ENCODE measurements at regions of chr20 and their contacts with region 1.

Region 1: GRCh38 chr20:44683263-44684046 is 31.7 kb upstream of the CCN5 start:
- DNase-seq: no peak
- H3K4me3 ChIP-seq: no peak overlapping the region
- CTCF ChIP-seq: peak; percentile 77

Region 2: DNA sequence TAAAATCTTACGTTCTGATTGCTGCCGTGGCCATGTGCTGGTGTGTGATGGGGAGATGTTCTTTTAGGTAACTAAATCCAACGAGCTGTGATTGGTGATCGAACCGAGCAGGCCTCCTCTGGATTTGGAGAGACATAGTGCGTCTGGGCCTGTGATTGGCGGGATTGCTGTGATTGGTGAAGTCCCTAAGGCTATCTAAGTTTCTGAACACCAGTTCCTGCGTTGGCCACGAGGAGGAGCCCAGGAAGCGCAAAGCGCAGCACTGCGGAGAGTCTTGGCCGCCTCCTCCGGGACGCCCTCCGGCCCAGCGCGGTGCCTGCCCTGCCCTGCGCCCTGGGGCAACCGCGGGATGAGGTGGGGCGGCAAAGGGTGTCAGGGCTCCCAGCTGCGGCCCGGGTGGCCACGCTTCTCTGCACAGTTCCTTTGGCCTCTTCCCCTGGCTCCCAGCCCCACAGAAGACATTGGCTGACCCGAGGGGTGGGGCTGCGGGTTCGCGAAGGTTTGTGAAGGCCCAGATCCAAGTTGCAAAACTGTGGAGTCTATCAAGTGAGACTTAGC is 294.9 kb before region 1 on chr20:
- CTCF ChIA-PET with region 1: interaction called, 24 read pairs
- POLR2A ChIA-PET with region 1: no interaction called
- DNase-seq: peak; percentile 7
- H3K4me3 ChIP-seq: no peak overlapping the region
- CTCF ChIP-seq: peak; percentile 90

Region 3: GRCh38 chr20:44648579-44648978 is 34.9 kb before region 1 on chr20:
- CTCF ChIA-PET with region 1: interaction called, 18 read pairs
- POLR2A ChIA-PET with region 1: interaction called, 6 read pairs
- DNase-seq: no peak
- H3K4me3 ChIP-seq: no peak overlapping the region
- CTCF ChIP-seq: no peak

Region 4: DNA sequence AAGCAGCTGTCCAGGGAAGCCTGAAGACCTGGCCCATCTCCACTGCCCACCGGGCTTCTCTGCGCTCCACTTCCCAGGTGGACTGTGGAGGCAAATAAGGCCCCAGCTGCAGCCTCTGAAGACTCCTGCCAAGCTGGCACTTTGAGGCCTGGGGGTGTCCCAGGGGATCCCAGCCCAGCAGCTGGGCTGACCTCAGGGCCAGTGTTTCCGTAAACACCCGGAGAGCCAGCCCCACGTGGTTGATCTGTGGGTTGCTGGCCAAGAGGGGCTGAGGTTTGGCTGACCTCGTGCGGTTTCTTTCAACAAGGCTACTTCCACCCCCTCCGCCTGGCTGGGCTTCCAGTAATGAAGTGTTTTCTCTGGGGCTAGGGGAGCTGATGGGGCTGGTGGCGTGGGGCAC is 19.3 kb after region 1 on chr20:
- CTCF ChIA-PET with region 1: interaction called, 28 read pairs
- POLR2A ChIA-PET with region 1: no interaction called
- DNase-seq: no peak
- H3K4me3 ChIP-seq: no peak overlapping the region
- CTCF ChIP-seq: no peak

Region 5: GRCh38 chr20:44733341-44734069 is 50.0 kb after region 1 on chr20:
- CTCF ChIA-PET with region 1: interaction called, 801 read pairs
- POLR2A ChIA-PET with region 1: no interaction called
- DNase-seq: no peak
- H3K4me3 ChIP-seq: no peak overlapping the region
- CTCF ChIP-seq: peak; percentile 93

Region 6: DNA sequence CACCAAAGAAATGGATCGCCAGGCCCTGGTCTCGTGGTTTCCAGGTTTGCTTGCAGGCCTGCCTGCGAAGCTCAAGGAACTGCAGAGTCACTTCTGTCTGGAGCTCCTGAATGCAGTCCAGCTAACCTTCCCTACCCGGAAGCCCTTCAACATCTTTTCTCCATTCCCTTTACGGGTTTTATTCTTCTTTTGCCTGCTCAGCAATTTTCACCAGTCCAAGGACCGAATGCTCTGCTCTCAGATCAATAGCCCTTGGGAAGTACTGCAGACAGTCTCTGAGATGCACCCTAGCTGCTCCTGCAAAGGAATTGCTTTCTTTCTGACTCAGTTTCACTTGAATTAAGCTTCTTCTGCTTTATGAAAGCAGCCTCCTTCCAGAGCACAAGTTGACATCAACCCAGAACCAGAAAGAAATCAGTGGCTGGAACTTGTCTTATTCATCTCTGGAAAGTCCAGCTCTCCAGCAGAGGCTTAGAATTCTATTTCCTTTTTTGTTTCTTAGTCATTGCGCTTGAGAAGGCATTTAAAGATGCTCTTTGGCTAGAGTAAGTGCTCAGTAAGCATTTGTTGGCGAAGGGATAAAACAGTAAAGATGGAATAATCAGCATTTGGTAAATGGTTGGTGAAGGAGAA is 183.4 kb after region 1 on chr20:
- CTCF ChIA-PET with region 1: interaction called, 36 read pairs
- POLR2A ChIA-PET with region 1: no interaction called
- DNase-seq: no peak
- H3K4me3 ChIP-seq: no peak overlapping the region
- CTCF ChIP-seq: no peak

Measured in AG04449 (cell line).